PC-3 (cell line): ENCODE measurements at regions of chr1 and their contacts with region 1.

Region 1: DNA sequence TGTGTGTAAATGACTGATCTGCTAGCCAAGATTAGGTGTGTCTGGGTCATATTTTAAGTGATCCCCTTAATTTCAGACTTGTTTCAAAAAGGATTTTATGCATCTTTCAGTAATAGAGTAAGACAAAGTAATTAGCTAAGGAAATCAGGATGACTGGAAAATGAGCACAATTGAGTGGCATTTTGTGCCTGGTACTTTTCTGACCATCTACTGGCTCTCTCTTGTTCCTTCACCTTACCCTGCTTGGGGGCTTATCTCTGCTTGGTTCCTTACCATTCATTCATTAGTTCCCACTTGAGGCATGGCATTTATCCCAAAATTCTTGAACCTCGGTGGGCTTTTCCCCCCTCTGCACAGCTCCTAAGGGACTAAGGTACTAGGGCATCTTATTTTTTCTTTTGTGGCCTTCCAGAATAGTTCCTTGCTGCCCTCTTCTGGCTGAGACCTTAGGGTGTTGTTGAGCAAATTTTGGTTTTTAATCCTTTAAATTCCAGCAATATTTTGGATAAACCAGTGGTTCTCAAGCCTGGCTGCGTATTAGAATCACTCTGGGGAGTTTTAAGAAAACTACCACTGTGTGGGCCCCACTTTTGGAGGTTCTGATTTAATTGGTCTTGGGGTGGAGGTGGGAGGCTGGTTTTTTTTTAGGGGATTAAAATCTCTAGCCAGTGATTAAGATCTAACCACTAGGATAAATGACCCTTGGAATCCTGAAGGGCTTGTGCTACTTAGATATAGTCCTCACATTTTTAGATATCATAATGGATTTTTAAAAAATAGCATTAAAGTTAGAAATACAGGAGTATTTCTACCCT is 50.8 kb downstream of the HS2ST1 start:
- DNase-seq: peak; percentile 57
- ATAC-seq: peak; percentile 61
- H3K4me3 ChIP-seq: no peak overlapping the region
- H3K27ac ChIP-seq: no peak overlapping the region
- H3K4me1 ChIP-seq: no peaks in the 10 kb centered on the region
- H3K27me3 ChIP-seq: no peaks in the 10 kb centered on the region
- CTCF ChIP-seq: peak; percentile 85

Region 2: DNA sequence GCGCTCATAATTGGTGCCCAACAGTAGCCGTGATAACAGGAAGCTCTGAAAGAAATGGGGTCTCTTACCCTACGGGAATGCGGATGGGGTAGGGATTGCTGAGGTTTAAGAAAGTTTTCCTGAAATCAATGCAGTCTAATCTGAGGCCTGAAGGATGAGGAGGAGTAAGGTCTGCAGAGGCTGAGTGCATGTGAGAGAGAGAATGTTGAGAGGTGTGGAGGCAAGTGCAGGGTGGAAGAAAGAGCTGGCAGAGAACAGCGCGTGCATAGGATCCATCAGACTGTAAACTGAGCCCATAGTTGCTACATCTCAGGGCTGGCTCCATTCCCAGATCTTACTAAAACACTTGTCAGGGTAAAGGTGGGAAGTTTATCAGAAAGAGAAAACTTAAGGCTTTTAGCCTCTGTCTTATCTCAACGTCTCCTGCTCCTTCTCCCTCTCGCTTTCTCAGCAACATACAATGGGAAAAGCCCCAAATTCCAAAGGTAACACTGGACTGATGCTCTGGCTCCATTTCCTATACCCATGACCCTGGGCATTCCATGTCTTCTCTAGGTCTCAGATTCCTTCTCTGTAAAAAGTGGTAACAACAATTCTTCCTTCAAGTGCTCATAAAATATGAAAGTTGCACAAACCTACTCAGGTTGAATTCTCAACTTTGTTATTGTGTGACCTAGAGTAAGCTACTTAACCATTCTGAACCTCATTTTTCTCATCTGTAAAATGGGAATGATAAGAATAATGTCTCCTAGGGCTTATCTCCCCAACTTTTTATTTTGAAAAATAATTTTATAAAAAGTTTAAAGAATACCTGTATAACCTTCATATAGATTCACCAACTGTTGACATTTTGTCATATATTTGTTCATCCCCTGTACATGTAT is 185.7 kb before region 1 on chr1:
- CTCF ChIA-PET with region 1: no interaction called
- POLR2A ChIA-PET with region 1: no interaction called
- intact Hi-C with region 1: loop called (anchors 2 kb)
- DNase-seq: peak; percentile 68
- ATAC-seq: peak; percentile 60
- H3K4me3 ChIP-seq: no peak overlapping the region
- H3K27ac ChIP-seq: peak overlapping the region; percentile 26
- H3K4me1 ChIP-seq: peaks cover 32% of the 10 kb centered on the region
- H3K27me3 ChIP-seq: no peaks in the 10 kb centered on the region
- CTCF ChIP-seq: no peak

Region 3: DNA sequence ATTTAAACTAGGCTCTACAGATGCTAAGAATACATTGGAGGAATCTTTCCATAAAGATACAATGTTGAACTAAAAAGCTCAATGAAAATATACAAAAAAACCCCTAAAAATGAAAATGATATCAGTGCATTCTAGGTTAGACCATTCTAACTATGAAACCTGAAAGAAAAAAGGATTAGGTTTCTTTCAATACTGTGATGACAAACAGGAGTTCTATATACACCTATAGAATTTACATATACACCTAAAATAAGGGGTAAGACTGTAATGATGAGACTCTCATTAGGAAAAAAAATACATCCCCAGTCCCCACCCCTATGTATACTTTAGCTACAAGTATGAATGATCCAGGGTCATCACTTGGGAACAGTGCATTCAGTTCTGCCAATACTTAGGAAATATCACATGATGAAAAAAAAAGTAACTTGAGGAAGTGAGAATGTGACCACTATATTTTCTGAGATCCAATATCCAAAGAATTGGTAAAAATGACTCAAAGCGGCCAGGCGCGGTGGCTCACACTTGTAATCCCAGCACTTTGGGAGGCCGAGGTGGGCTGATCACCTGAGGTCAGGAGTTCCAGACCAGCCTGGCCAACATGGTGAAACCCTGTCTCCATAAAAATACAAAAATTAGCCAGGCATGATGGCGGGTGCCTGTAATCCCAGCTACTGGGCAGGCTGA is 77.6 kb before region 1 on chr1:
- CTCF ChIA-PET with region 1: no interaction called
- POLR2A ChIA-PET with region 1: no interaction called
- intact Hi-C with region 1: no loop called
- DNase-seq: no peak
- ATAC-seq: no peak
- H3K4me3 ChIP-seq: no peak overlapping the region
- H3K27ac ChIP-seq: no peak overlapping the region
- H3K4me1 ChIP-seq: no peaks in the 10 kb centered on the region
- H3K27me3 ChIP-seq: no peaks in the 10 kb centered on the region
- CTCF ChIP-seq: no peak